CD14-positive monocyte (primary cell): ENCODE measurements at regions of chr19 and their contacts with region 1.

Region 1: GRCh38 chr19:45405435-45406225 is 761 bp upstream of the PPP1R13L start:
- DNase-seq: peak; percentile 59 to 72 (median 63)
- H3K4me3 ChIP-seq: peak overlapping the region; percentile 62 to 91 (median 73)
- H3K4me3 Mint-ChIP-seq: peak overlapping the region; percentile 81 to 95
- H3K27ac ChIP-seq: peak overlapping the region; percentile 71 to 93
- H3K27ac Mint-ChIP-seq: peak overlapping the region; percentile 88 to 100 (median 98)
- H3K4me1 ChIP-seq: peaks cover 57 to 69% of the 10 kb centered on the region in 2 donors
- H3K4me1 Mint-ChIP-seq: peaks cover 50% of the 10 kb centered on the region
- H3K27me3 ChIP-seq: peaks cover 28 to 39% of the 10 kb centered on the region in 2 donors
- H3K27me3 Mint-ChIP-seq: peaks cover 37 to 42% (median 41%) of the 10 kb centered on the region in 3 donors
- CTCF ChIP-seq: no peak

Region 2: GRCh38 chr19:45370410-45371204 is 35.0 kb before region 1 on chr19 and contains the start of gene ERCC2:
- intact Hi-C with region 1: loop called in 1 of 2 experiments (anchors 5 kb)
- DNase-seq: peak; percentile 97 to 99 (median 98)
- H3K4me3 ChIP-seq: peak within 1 kb of the TSS; percentile 61 to 88 (median 83)
- H3K4me3 Mint-ChIP-seq: peak within 1 kb of the TSS; percentile 89 to 96
- H3K27ac ChIP-seq: peak within 1 kb of the TSS; percentile 72 to 88
- H3K27ac Mint-ChIP-seq: peak within 1 kb of the TSS; percentile 91 to 98 (median 96)
- H3K4me1 ChIP-seq: peaks cover 7 to 11% of the 10 kb centered on the region in 2 donors
- H3K4me1 Mint-ChIP-seq: peaks cover 13% of the 10 kb centered on the region
- H3K27me3 ChIP-seq: no peaks in the 10 kb centered on the region
- H3K27me3 Mint-ChIP-seq: peaks cover 0 to 6% (median 4%) of the 10 kb centered on the region in 3 donors
- CTCF ChIP-seq: no peak
- polyA plus RNA-seq, gene ERCC2: 4.0 to 20.0 (median 4.4) TPM

Region 3: GRCh38 chr19:45485305-45486077 is 79.9 kb after region 1 on chr19:
- intact Hi-C with region 1: loop called in 1 of 2 experiments (anchors 1 kb)
- DNase-seq: peak; percentile 89 to 97 (median 93)
- H3K4me3 ChIP-seq: peak overlapping the region; percentile 74 to 92 (median 75)
- H3K4me3 Mint-ChIP-seq: peak overlapping the region; percentile 87 to 91
- H3K27ac ChIP-seq: peak overlapping the region in 1 of 2 donors; percentile 48
- H3K27ac Mint-ChIP-seq: peak overlapping the region in 6 of 7 donors; percentile 74 to 95 (median 86)
- H3K4me1 ChIP-seq: peaks cover 7 to 11% of the 10 kb centered on the region in 2 donors
- H3K4me1 Mint-ChIP-seq: peaks cover 18% of the 10 kb centered on the region
- H3K27me3 ChIP-seq: no peaks in the 10 kb centered on the region
- H3K27me3 Mint-ChIP-seq: peaks cover 5 to 19% (median 10%) of the 10 kb centered on the region in 3 donors
- CTCF ChIP-seq: peak; percentile 92